ENCODE measurements at regions of chrX and their contacts with region 1.

Region 1: DNA sequence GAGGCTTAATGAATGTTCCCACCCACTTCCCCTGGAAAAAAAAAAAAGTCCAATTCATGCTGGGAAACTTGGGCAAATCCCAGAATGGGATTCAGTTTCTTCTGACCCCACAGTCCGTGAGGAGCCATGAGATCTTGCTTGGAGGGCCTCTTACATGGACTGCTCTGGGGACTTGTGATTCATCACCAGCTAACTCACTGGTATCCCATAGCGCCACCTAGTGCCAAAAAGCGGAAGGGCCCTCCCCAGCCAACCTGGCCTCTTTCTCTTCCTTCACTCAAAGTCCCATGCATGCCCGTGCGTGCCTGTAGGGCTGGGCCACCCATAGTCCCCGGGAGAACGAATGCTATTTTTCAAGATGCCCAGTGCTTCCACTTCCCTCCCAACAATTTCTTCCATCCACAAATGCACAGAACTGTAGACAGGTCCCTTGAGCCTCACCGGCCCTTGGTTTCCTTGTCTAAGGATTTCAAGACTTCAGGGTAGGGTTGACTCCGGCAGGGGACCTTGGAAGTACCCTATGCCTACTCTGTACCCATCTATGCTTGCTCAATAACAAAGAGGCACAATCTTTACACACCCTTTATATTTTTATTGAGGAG is 5.1 kb downstream of the RTL5 start:
- DNase-seq: peak; percentile 79 to 84
- H3K4me3 ChIP-seq: no peak overlapping the region
- H3K27ac ChIP-seq: peak overlapping the region; percentile 34 to 76
- H3K4me1 ChIP-seq: no peaks in the 10 kb centered on the region
- H3K27me3 ChIP-seq: peaks cover 0 to 79% of the 10 kb centered on the region in 2 donors
- CTCF ChIP-seq: peak; percentile 61 to 83 (median 66)
- POLR2A ChIP-seq: no peak

Region 2: GRCh38 chrX:71870208-71871098 is 256.2 kb before region 1 on chrX:
- intact Hi-C with region 1: no loop called
- DNase-seq: no peak
- H3K4me3 ChIP-seq: no peak overlapping the region
- H3K27ac ChIP-seq: no peak overlapping the region
- H3K4me1 ChIP-seq: no peaks in the 10 kb centered on the region
- H3K27me3 ChIP-seq: peaks cover 0 to 64% of the 10 kb centered on the region in 2 donors
- CTCF ChIP-seq: no peak
- POLR2A ChIP-seq: no peak

Region 3: GRCh38 chrX:72045552-72046277 is 80.9 kb before region 1 on chrX:
- intact Hi-C with region 1: loop called (anchors 10 kb)
- DNase-seq: peak in 1 of 2 donors; percentile 70
- H3K4me3 ChIP-seq: no peak overlapping the region
- H3K27ac ChIP-seq: peak overlapping the region; percentile 77 to 91
- H3K4me1 ChIP-seq: no peaks in the 10 kb centered on the region
- H3K27me3 ChIP-seq: peaks cover 0 to 53% of the 10 kb centered on the region in 2 donors
- CTCF ChIP-seq: no peak
- POLR2A ChIP-seq: no peak